Mammary epithelial cell (primary cell): ENCODE measurements at regions of chr1 and their contacts with region 1.

Region 1: DNA sequence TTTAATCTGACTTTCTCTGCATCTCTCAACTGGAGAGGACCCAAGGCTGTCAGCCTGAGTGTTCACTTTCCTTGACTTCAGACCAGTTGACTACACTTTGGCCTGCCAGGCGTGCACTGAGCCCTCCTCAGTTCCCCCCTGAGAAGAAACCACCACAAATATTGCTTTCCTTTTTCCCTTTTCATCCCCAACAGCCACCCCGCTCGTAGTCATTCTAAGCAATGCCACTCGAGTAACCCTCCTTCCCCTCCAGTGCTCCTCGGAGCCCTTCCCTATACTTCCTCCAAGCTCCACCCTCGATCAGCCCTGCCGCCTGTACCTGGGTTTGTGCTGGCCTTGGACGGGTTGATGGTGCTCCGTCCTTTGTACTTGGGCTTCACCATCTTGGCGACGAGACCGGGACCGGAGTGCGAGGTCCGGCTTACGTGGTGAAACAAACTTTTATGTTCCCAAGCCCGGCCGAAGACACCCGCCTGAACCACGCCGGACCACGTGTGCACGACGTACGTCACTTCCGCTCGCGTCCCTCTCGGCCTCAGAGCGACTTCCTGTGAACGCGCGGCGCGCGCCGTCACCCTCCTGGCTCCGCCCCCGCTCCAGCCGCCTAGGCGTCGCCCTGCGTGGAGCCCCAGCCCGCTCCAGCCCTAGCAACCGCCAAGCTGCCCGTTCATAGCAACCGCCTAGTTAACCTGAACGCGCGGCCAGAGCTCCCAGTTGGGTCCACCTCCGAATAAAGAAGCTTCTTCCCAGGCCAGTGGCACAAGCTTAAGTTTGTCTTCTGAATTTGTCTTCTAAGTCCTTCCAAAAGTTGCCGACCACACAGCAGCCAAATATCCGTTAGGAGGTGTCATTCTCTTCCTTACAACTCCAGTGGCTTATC is at the start of gene GNL2:
- DNase-seq: peak; percentile 94
- H3K4me3 ChIP-seq: peak within 1 kb of the TSS; percentile 83 to 91 (median 88)
- H3K27ac ChIP-seq: peak within 1 kb of the TSS; percentile 93
- H3K4me1 ChIP-seq: peaks cover 11% of the 10 kb centered on the region
- H3K27me3 ChIP-seq: no peaks in the 10 kb centered on the region
- CTCF ChIP-seq: no peak
- total RNA-seq, gene GNL2: 56.5 to 74.6 TPM

Region 2: GRCh38 chr1:37509181-37509580 is 86.5 kb before region 1 on chr1:
- CTCF ChIA-PET with region 1: no interaction called
- dilution Hi-C with region 1: loop called (anchors 5 kb)
- in situ Hi-C with region 1: no loop called
- intact Hi-C with region 1: no loop called
- DNase-seq: peak; percentile 9
- H3K4me3 ChIP-seq: no peak overlapping the region
- H3K27ac ChIP-seq: no peak overlapping the region
- H3K4me1 ChIP-seq: peaks cover 7% of the 10 kb centered on the region
- H3K27me3 ChIP-seq: no peaks in the 10 kb centered on the region
- CTCF ChIP-seq: peak; percentile 22 to 25

Region 3: GRCh38 chr1:37553927-37554808 is 41.5 kb before region 1 on chr1 and contains the start of gene SNIP1:
- CTCF ChIA-PET with region 1: no interaction called
- dilution Hi-C with region 1: no loop called
- in situ Hi-C with region 1: no loop called
- intact Hi-C with region 1: loop called (anchors 2 kb)
- DNase-seq: peak; percentile 88
- H3K4me3 ChIP-seq: peak within 1 kb of the TSS; percentile 93 to 97 (median 97)
- H3K27ac ChIP-seq: peak within 1 kb of the TSS; percentile 85
- H3K4me1 ChIP-seq: peaks cover 19% of the 10 kb centered on the region
- H3K27me3 ChIP-seq: no peaks in the 10 kb centered on the region
- CTCF ChIP-seq: no peak
- total RNA-seq, gene SNIP1: 22.5 to 23.0 TPM

Region 4: DNA sequence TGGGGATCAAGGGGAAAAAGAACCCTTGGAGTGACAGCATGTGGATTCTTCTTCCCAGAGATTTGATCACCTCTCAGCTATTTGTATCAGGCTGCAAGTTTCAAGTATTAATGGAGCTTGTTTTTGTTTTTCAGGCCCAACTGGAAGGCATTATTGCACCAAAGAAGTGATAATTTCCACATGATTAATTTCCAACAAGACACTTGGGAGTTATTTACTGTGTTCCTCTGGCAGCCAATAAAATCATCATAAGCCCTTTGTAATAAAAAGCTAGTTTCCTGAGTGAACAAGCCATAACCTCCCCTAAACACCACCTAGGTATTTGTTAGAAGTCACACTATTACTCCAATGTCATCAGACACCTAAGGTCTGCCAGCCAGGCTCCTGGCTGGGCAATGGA is 30.8 kb before region 1 on chr1:
- CTCF ChIA-PET with region 1: no interaction called
- dilution Hi-C with region 1: no loop called
- in situ Hi-C with region 1: no loop called
- intact Hi-C with region 1: no loop called
- DNase-seq: no peak
- H3K4me3 ChIP-seq: no peak overlapping the region
- H3K27ac ChIP-seq: no peak overlapping the region
- H3K4me1 ChIP-seq: no peaks in the 10 kb centered on the region
- H3K27me3 ChIP-seq: no peaks in the 10 kb centered on the region
- CTCF ChIP-seq: no peak

Region 5: GRCh38 chr1:37575692-37576091 is 20.0 kb before region 1 on chr1:
- CTCF ChIA-PET with region 1: no interaction called
- dilution Hi-C with region 1: no loop called
- in situ Hi-C with region 1: no loop called
- intact Hi-C with region 1: loop called (anchors 1 kb)
- DNase-seq: no peak
- H3K4me3 ChIP-seq: no peak overlapping the region
- H3K27ac ChIP-seq: peak overlapping the region; percentile 54
- H3K4me1 ChIP-seq: peaks cover 29% of the 10 kb centered on the region
- H3K27me3 ChIP-seq: no peaks in the 10 kb centered on the region
- CTCF ChIP-seq: no peak

Region 6: GRCh38 chr1:37859507-37860345 is 264.0 kb after region 1 on chr1 and contains the start of gene MTF1:
- CTCF ChIA-PET with region 1: no interaction called
- dilution Hi-C with region 1: no loop called
- in situ Hi-C with region 1: loop called in 1 of 2 experiments (anchors 10 kb)
- intact Hi-C with region 1: loop called (anchors 10 kb)
- DNase-seq: peak; percentile 97
- H3K4me3 ChIP-seq: peak within 1 kb of the TSS; percentile 69 to 83 (median 78)
- H3K27ac ChIP-seq: peak within 1 kb of the TSS; percentile 89
- H3K4me1 ChIP-seq: peaks cover 29% of the 10 kb centered on the region
- H3K27me3 ChIP-seq: no peaks in the 10 kb centered on the region
- CTCF ChIP-seq: peak; percentile 62 to 93
- total RNA-seq, gene MTF1: 4.5 to 28.7 TPM